HEK293 (cell line): ENCODE measurements at regions of chr12 and their contacts with region 1.

Region 1: GRCh38 chr12:93397412-93397811 is 19.7 kb downstream of the NUDT4 start:
- H3K4me3 ChIP-seq: no peak overlapping the region
- H3K27ac ChIP-seq: no peak overlapping the region
- H3K4me1 ChIP-seq: no peaks in the 10 kb centered on the region
- CTCF ChIP-seq: no peak

Region 2: GRCh38 chr12:93098077-93098476 is 299.3 kb before region 1 on chr12:
- CTCF ChIA-PET with region 1: interaction called, 16 read pairs
- POLR2A ChIA-PET with region 1: no interaction called
- H3K4me3 ChIP-seq: no peak overlapping the region
- H3K27ac ChIP-seq: no peak overlapping the region
- H3K4me1 ChIP-seq: no peaks in the 10 kb centered on the region
- CTCF ChIP-seq: peak; percentile 31; the same call in 1 of the 2 replicates

Region 3: GRCh38 chr12:93378373-93379325 is 18.8 kb before region 1 on chr12:
- CTCF ChIA-PET with region 1: interaction called, 12 read pairs
- POLR2A ChIA-PET with region 1: interaction called, 3 read pairs
- H3K4me3 ChIP-seq: peak overlapping the region; percentile 75
- H3K27ac ChIP-seq: peak overlapping the region; percentile 74
- H3K4me1 ChIP-seq: peaks cover 10% of the 10 kb centered on the region
- CTCF ChIP-seq: no peak

Region 4: GRCh38 chr12:94459728-94460615 is 1062.6 kb after region 1 on chr12 and contains the start of gene CEP83:
- CTCF ChIA-PET with region 1: no interaction called
- POLR2A ChIA-PET with region 1: no interaction called
- H3K4me3 ChIP-seq: peak within 1 kb of the TSS; percentile 95
- H3K27ac ChIP-seq: peak within 1 kb of the TSS; percentile 69
- H3K4me1 ChIP-seq: no peaks in the 10 kb centered on the region; the same call in 1 of the 2 replicates
- CTCF ChIP-seq: peak; percentile 45